PC-9 (cell line): ENCODE measurements at regions of chr1 and their contacts with region 1.

Region 1: DNA sequence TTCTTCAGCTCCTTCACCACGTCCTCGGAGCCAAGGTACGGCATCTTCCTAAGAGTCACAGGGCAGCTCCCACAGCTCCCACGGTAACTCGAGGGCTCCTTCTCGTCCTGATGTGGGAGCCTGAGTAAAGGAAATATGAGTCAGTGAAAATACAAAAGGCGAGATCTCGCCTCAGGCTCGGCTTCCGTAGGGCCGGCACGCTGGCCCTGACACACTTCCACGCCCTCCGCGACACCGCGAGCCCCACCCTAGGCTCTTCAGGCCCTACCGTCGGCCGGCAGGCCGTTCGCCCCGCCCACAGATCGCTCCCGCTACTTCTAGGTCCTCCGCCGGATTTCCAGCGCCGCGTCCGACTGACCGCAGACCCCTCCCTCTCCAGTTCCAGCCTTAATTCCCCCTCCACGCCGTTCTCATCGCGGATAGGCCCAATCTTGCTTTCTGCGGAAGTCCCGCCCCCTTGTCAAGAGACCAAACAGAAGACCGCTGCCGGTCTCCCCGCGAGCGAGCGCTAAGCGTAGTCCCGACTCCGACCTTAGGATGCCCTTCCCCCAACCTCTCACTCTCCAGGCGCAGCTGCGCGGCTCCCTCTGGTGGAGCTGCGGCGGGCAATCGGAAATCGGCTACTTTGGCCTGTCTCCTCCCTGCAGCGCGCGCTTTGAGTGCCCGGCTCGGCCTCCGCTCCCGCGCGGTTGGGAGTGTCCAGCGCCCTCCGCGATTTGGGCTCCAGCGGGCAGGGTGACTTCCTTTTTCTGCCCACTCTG is at the starts of genes AP4B1 and DCLRE1B:
- DNase-seq: peak; percentile 98 to 100
- H3K4me3 ChIP-seq: peak within 1 kb of the TSS; percentile 85
- H3K27ac ChIP-seq: peak within 1 kb of the TSS; percentile 65
- H3K4me1 ChIP-seq: peaks cover 10% of the 10 kb centered on the region
- H3K27me3 ChIP-seq: no peaks in the 10 kb centered on the region
- CTCF ChIP-seq: peak; percentile 69
- total RNA-seq, gene AP4B1: 10.0 and 11.7 TPM in 2 replicates
- total RNA-seq, gene DCLRE1B: 10.1 and 11.2 TPM in 2 replicates

Region 2: DNA sequence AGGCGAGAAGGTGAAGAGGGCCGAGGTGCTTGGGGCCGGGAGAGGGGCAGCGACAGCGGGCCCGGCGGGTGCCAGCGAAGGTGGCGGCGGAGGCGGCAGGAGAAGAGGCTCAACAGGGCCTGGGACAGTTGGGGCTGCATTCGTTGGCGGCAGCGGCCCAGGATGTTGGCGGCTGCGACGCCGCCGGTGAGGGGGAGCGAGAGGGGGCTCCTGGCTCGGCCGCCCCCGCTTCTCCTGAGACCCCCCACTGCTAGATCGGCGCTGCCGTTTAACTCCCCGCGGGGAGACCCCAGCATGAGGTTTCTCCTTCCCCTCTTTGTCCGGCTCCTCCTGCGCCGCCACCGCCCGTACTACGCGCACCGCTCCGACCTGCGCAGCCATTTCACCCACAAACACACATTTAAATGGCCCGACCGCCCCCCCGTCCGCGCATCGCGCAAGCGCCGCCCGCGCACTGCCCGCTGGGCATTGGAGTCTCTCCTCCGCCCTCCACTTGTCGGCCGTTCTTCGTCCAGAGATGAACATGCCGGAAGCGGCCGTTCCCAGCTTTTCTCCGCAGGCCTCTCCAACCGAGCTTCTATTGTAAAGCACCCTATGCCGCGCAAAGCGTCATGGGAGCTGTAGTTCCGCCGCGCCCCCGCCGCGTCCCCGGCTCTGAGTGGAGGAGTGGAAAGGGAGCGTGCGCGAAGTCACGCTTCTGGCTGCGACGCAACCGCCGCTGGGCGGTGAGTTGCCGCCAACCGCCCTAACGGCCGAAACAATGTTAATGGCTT is 92.8 kb before region 1 on chr1 and contains the start of gene RSBN1:
- CTCF ChIA-PET with region 1: no interaction called
- POLR2A ChIA-PET with region 1: no interaction called
- intact Hi-C with region 1: loop called (anchors 1 kb)
- DNase-seq: peak; percentile 98 to 99
- H3K4me3 ChIP-seq: peak within 1 kb of the TSS; percentile 72
- H3K27ac ChIP-seq: peak within 1 kb of the TSS; percentile 23
- H3K4me1 ChIP-seq: peaks cover 32% of the 10 kb centered on the region
- H3K27me3 ChIP-seq: no peaks in the 10 kb centered on the region
- CTCF ChIP-seq: no peak
- total RNA-seq, gene RSBN1: 11.3 and 12.3 TPM in 2 replicates

Region 3: GRCh38 chr1:113835642-113836307 is 69.1 kb before region 1 on chr1:
- CTCF ChIA-PET with region 1: no interaction called
- POLR2A ChIA-PET with region 1: no interaction called
- intact Hi-C with region 1: loop called (anchors 1 kb)
- DNase-seq: peak in 1 of 2 experiments; percentile 54
- H3K4me3 ChIP-seq: no peak overlapping the region
- H3K27ac ChIP-seq: no peak overlapping the region
- H3K4me1 ChIP-seq: no peaks in the 10 kb centered on the region
- H3K27me3 ChIP-seq: no peaks in the 10 kb centered on the region
- CTCF ChIP-seq: peak; percentile 91

Region 4: GRCh38 chr1:113928941-113929749 is 24.3 kb after region 1 on chr1 and contains the start of gene HIPK1:
- CTCF ChIA-PET with region 1: interaction called, 5 read pairs
- POLR2A ChIA-PET with region 1: interaction called, 8 read pairs
- intact Hi-C with region 1: loop called (anchors 1 kb)
- DNase-seq: peak; percentile 81 to 88
- H3K4me3 ChIP-seq: peak within 1 kb of the TSS; percentile 93
- H3K27ac ChIP-seq: peak within 1 kb of the TSS; percentile 61
- H3K4me1 ChIP-seq: peaks cover 33% of the 10 kb centered on the region
- H3K27me3 ChIP-seq: no peaks in the 10 kb centered on the region
- CTCF ChIP-seq: no peak; the same call in 1 of the 2 replicates
- total RNA-seq, gene HIPK1: 20.0 and 26.3 TPM in 2 replicates

Region 5: GRCh38 chr1:114956564-114956963 is 1051.7 kb after region 1 on chr1:
- CTCF ChIA-PET with region 1: interaction called, 10 read pairs
- POLR2A ChIA-PET with region 1: no interaction called
- intact Hi-C with region 1: no loop called
- DNase-seq: peak in 1 of 2 experiments; percentile 5
- H3K4me3 ChIP-seq: no peak overlapping the region
- H3K27ac ChIP-seq: no peak overlapping the region
- H3K4me1 ChIP-seq: no peaks in the 10 kb centered on the region
- H3K27me3 ChIP-seq: no peaks in the 10 kb centered on the region
- CTCF ChIP-seq: peak; percentile 60; the same call in 1 of the 2 replicates